Endothelial cell of umbilical vein (primary cell): ENCODE measurements at regions of chr6 and their contacts with region 1.

Region 1: GRCh38 chr6:69835414-69836179 is 30.8 kb upstream of the COL19A1 start:
- DNase-seq: peak; percentile 59
- H3K4me3 ChIP-seq: no peak overlapping the region
- H3K27ac ChIP-seq: no peak overlapping the region
- H3K4me1 ChIP-seq: no peaks in the 10 kb centered on the region
- H3K27me3 ChIP-seq: peaks cover 0 to 3% of the 10 kb centered on the region in 2 experiments
- CTCF ChIP-seq: peak; percentile 46 to 70
- POLR2A ChIP-seq: no peak

Region 2: GRCh38 chr6:70107852-70108629 is 272.4 kb after region 1 on chr6:
- CTCF ChIA-PET with region 1: interaction called, 9 read pairs
- POLR2A ChIA-PET with region 1: no interaction called
- dilution Hi-C with region 1: no loop called
- intact Hi-C with region 1: loop called (anchors 2 kb)
- DNase-seq: peak; percentile 26
- H3K4me3 ChIP-seq: no peak overlapping the region
- H3K27ac ChIP-seq: no peak overlapping the region
- H3K4me1 ChIP-seq: no peaks in the 10 kb centered on the region
- H3K27me3 ChIP-seq: no peaks in the 10 kb centered on the region
- CTCF ChIP-seq: peak; percentile 33 to 35
- POLR2A ChIP-seq: no peak

Region 3: GRCh38 chr6:70166088-70166958 is 330.7 kb after region 1 on chr6:
- CTCF ChIA-PET with region 1: interaction called, 5 read pairs
- POLR2A ChIA-PET with region 1: no interaction called
- dilution Hi-C with region 1: no loop called
- intact Hi-C with region 1: loop called (anchors 5 kb)
- DNase-seq: peak; percentile 21
- H3K4me3 ChIP-seq: no peak overlapping the region
- H3K27ac ChIP-seq: no peak overlapping the region
- H3K4me1 ChIP-seq: no peaks in the 10 kb centered on the region
- H3K27me3 ChIP-seq: no peaks in the 10 kb centered on the region
- CTCF ChIP-seq: peak; percentile 29 to 61
- POLR2A ChIP-seq: no peak